PC-3 (cell line): ENCODE measurements at regions of chr2 and their contacts with region 1.

Region 1: DNA sequence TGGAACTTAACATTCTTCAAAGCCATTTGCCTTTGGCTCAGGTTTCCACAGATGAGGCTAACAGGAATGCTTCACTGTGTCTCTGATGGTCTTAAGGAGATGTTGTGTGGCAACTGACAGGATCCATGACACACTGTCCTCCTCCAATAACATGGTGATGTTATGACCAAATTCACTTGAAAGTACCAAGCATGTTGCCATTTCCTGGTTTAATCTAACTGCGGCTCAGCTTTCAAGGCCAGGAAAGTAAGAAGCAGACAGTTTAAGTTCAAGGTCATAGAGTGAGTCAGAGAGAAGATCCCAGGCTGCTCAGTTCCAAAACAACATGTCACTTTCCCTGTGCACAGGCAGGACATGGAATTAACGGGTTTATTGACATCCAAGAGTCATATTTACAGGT is 513.6 kb downstream of the STK39 start:
- DNase-seq: no peak
- ATAC-seq: peak; percentile 75
- H3K4me3 ChIP-seq: no peak overlapping the region
- H3K27ac ChIP-seq: no peak overlapping the region
- H3K4me1 ChIP-seq: no peaks in the 10 kb centered on the region
- H3K27me3 ChIP-seq: peaks cover 5% of the 10 kb centered on the region; the same call in 1 of the 2 replicates
- CTCF ChIP-seq: no peak

Region 2: DNA sequence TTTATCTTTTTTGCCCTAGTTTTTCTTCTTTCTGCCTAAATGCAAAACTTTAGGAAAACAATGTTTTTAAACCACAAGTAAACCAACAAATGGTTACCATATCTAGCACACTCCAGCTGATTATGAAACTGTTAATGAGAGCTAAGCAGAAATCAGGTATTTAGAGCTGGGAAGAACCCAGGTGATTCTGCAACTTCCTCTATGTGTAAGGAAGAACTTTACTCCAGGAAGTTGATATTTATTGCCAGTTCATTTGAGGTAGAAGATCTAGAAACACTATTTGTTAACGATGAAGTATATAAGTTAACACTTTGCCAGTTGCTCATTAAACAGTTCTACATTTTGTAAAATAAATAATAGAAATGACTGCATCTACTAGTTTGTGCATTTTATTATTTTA is 435.7 kb before region 1 on chr2:
- CTCF ChIA-PET with region 1: no interaction called
- POLR2A ChIA-PET with region 1: interaction called, 10 read pairs
- intact Hi-C with region 1: no loop called
- DNase-seq: no peak
- ATAC-seq: no peak
- H3K4me3 ChIP-seq: no peak overlapping the region
- H3K27ac ChIP-seq: no peak overlapping the region
- H3K4me1 ChIP-seq: 0 out of 2 replicates have a peak, but pooled peaks cover 3% of the 10 kb centered on the region
- H3K27me3 ChIP-seq: no peaks in the 10 kb centered on the region
- CTCF ChIP-seq: no peak

Region 3: GRCh38 chr2:167640096-167640495 is 93.7 kb before region 1 on chr2:
- CTCF ChIA-PET with region 1: no interaction called
- POLR2A ChIA-PET with region 1: no interaction called
- intact Hi-C with region 1: no loop called
- DNase-seq: no peak
- ATAC-seq: no peak
- H3K4me3 ChIP-seq: no peak overlapping the region
- H3K27ac ChIP-seq: no peak overlapping the region
- H3K4me1 ChIP-seq: no peaks in the 10 kb centered on the region
- H3K27me3 ChIP-seq: no peaks in the 10 kb centered on the region
- CTCF ChIP-seq: no peak